CD8-positive, alpha-beta T cell (primary cell): ENCODE measurements at regions of chr7 and their contacts with region 1.

Region 1: GRCh38 chr7:12117170-12117569 is 93.9 kb upstream of the TMEM106B start:
- DNase-seq: no peak
- ATAC-seq: no peak
- H3K4me3 ChIP-seq: no peak overlapping the region
- H3K4me3 Mint-ChIP-seq: no peak overlapping the region
- H3K27ac ChIP-seq: no peak overlapping the region
- H3K27ac Mint-ChIP-seq: no peak overlapping the region
- H3K4me1 ChIP-seq: no peaks in the 10 kb centered on the region
- H3K4me1 Mint-ChIP-seq: peaks cover 1% of the 10 kb centered on the region
- H3K27me3 ChIP-seq: peaks cover 0 to under 1% of the 10 kb centered on the region in 2 experiments
- H3K27me3 Mint-ChIP-seq: peaks cover 10% of the 10 kb centered on the region
- CTCF ChIP-seq: no peak

Region 2: DNA sequence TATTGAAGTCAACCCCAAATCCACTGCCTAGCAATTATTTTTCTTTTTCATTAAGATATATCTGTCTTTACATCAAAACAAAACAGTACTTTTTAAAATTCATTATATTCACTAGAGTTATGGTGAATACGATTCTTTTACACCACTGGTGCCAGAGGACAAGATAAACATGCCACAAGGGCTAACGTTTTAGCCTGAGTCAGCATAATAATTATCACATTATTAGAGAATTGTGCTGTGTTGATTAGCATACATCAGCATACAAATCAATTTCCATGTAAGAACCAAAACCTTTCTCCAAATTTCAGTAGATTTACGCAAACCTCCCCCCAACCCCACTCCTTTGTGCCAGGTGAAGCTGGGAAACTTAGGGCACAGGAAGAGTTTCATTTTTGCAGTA is 37.2 kb before region 1 on chr7:
- CTCF ChIA-PET with region 1: no interaction called
- POLR2A ChIA-PET with region 1: no interaction called
- intact Hi-C with region 1: no loop called
- DNase-seq: no peak
- ATAC-seq: no peak
- H3K4me3 ChIP-seq: no peak overlapping the region
- H3K4me3 Mint-ChIP-seq: no peak overlapping the region
- H3K27ac ChIP-seq: no peak overlapping the region
- H3K27ac Mint-ChIP-seq: no peak overlapping the region
- H3K4me1 ChIP-seq: no peaks in the 10 kb centered on the region
- H3K4me1 Mint-ChIP-seq: no peaks in the 10 kb centered on the region
- H3K27me3 ChIP-seq: no peaks in the 10 kb centered on the region
- H3K27me3 Mint-ChIP-seq: peaks cover 4% of the 10 kb centered on the region
- CTCF ChIP-seq: no peak

Region 3: DNA sequence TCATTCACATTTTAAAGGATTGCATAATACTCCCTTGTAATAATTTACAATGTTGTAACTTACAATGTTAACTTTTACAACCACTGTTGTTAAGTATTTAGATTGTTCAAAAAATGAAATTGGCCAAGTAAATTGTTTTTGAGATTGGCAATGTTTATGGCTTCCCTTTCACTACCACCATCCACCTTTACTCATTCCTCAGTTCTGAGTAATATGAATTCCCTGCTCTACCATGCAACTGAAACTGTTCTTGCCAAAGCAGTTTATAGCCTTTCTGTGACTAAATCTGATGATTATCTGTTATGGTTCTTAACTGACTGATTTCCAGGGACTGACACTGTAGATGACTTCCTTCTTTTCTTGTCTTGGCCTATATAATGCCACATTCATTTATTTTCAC is 13.5 kb after region 1 on chr7:
- CTCF ChIA-PET with region 1: no interaction called
- POLR2A ChIA-PET with region 1: no interaction called
- intact Hi-C with region 1: loop called in 1 of 2 experiments (anchors 1 kb)
- DNase-seq: no peak
- ATAC-seq: no peak
- H3K4me3 ChIP-seq: no peak overlapping the region
- H3K4me3 Mint-ChIP-seq: no peak overlapping the region
- H3K27ac ChIP-seq: no peak overlapping the region
- H3K27ac Mint-ChIP-seq: no peak overlapping the region
- H3K4me1 ChIP-seq: peaks cover 5% of the 10 kb centered on the region
- H3K4me1 Mint-ChIP-seq: peaks cover 11% of the 10 kb centered on the region
- H3K27me3 ChIP-seq: no peaks in the 10 kb centered on the region
- H3K27me3 Mint-ChIP-seq: peaks cover 3% of the 10 kb centered on the region
- CTCF ChIP-seq: no peak